ENCODE measurements at regions of chr3 and their contacts with region 1.

Region 1: DNA sequence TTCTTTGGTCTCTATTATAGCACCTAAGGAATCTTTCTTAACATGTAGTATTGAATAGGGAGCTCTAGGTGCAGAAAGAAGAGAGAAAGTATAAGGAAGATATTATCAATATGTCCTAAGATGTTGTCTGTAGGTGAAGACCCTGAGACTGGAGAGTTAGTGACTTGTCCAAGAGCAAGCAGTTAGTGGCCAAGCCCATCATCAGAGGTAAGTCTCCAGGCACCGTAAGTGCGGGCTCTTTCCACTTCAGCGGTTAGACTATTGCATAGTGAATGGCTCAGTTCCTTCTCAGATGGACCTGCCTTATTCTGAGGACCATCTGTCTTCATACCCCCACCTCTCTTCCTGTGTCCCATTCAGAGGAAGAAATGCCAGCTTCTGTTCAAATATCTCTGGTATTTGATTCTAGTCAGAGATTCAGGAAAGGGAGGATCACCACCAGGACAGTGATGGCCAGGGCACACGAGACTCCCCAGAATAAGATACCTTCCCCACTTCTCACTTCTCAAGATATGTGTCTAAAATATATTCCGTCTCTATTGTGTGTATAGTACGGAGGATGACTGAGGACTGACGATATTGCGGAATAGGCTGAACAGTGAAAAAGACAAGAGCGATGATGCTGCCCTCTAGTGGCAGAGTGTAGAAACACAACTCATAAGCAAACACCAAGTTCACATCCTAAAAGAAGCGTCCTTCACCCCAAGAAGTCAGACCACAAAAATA is 19.1 kb upstream of the ADGRG7 start:
- DNase-seq: peak; percentile 66
- H3K4me3 Mint-ChIP-seq: no peak overlapping the region
- H3K27ac Mint-ChIP-seq: no peak overlapping the region
- H3K4me1 Mint-ChIP-seq: peaks cover 6% of the 10 kb centered on the region
- H3K27me3 Mint-ChIP-seq: peaks cover 4% of the 10 kb centered on the region

Region 2: DNA sequence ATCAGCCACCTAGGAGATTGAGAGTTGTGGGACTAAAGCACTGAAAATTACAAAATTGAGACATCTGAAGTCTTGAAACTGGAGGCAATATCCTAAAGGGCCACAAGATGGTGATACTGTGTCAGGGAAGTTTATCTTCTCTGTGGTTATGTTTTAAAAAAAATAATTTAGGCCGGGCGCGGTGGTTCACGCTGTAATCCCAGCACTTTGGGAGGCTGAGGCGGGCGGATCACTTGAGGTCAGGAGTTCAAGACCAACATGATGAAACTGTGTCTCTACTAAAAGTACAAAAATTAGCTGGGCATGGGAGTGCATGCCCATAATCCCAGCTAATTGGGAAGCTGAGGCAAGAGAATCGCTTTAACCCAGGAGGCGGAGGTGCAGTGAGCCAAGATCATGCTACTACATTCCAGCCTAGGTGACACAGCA is 273.6 kb before region 1 on chr3:
- CTCF ChIA-PET with region 1: interaction called, 22 read pairs
- POLR2A ChIA-PET with region 1: no interaction called
- intact Hi-C with region 1: loop called (anchors 1 kb)
- DNase-seq: peak; percentile 36
- H3K4me3 Mint-ChIP-seq: no peak overlapping the region
- H3K27ac Mint-ChIP-seq: no peak overlapping the region
- H3K4me1 Mint-ChIP-seq: peaks cover 8% of the 10 kb centered on the region
- H3K27me3 Mint-ChIP-seq: no peaks in the 10 kb centered on the region

Region 3: GRCh38 chr3:100437721-100438622 is 152.3 kb before region 1 on chr3:
- CTCF ChIA-PET with region 1: no interaction called
- POLR2A ChIA-PET with region 1: no interaction called
- intact Hi-C with region 1: no loop called
- DNase-seq: no peak
- H3K4me3 Mint-ChIP-seq: no peak overlapping the region
- H3K27ac Mint-ChIP-seq: no peak overlapping the region
- H3K4me1 Mint-ChIP-seq: peaks cover 8% of the 10 kb centered on the region
- H3K27me3 Mint-ChIP-seq: no peaks in the 10 kb centered on the region

Region 4: GRCh38 chr3:100492059-100493006 is 97.9 kb before region 1 on chr3 and contains the start of gene TMEM45A:
- CTCF ChIA-PET with region 1: interaction called, 4 read pairs
- POLR2A ChIA-PET with region 1: no interaction called
- intact Hi-C with region 1: loop called (anchors 10 kb)
- DNase-seq: peak; percentile 90
- H3K4me3 Mint-ChIP-seq: peak within 1 kb of the TSS; percentile 82
- H3K27ac Mint-ChIP-seq: no peak within 1 kb of the TSS
- H3K4me1 Mint-ChIP-seq: peaks cover 9% of the 10 kb centered on the region
- H3K27me3 Mint-ChIP-seq: peaks cover 11% of the 10 kb centered on the region
- total RNA-seq, gene TMEM45A: 0.65 to 0.74 TPM

Measured in activated CD4-positive, alpha-beta memory T cell treated with anti-CD3 and anti-CD28 coated beads for 36 hours (primary cell).